ENCODE measurements at regions of chr1 and their contacts with region 1.

Region 1: GRCh38 chr1:209860293-209860881 is 32.6 kb downstream of the UTP25 start:
- DNase-seq: peak; percentile 73
- ATAC-seq: peak; percentile 95
- H3K4me3 ChIP-seq: no peak overlapping the region
- H3K27ac ChIP-seq: no peak overlapping the region
- H3K4me1 ChIP-seq: peaks cover 0 to 14% of the 10 kb centered on the region in 2 experiments; a peak in 2 of 4 replicates
- H3K27me3 ChIP-seq: no peaks in the 10 kb centered on the region
- CTCF ChIP-seq: peak; percentile 82 to 83 (median 83)
- POLR2A ChIP-seq: no peak
- RAD21 ChIP-seq: peak; percentile 87

Region 2: DNA sequence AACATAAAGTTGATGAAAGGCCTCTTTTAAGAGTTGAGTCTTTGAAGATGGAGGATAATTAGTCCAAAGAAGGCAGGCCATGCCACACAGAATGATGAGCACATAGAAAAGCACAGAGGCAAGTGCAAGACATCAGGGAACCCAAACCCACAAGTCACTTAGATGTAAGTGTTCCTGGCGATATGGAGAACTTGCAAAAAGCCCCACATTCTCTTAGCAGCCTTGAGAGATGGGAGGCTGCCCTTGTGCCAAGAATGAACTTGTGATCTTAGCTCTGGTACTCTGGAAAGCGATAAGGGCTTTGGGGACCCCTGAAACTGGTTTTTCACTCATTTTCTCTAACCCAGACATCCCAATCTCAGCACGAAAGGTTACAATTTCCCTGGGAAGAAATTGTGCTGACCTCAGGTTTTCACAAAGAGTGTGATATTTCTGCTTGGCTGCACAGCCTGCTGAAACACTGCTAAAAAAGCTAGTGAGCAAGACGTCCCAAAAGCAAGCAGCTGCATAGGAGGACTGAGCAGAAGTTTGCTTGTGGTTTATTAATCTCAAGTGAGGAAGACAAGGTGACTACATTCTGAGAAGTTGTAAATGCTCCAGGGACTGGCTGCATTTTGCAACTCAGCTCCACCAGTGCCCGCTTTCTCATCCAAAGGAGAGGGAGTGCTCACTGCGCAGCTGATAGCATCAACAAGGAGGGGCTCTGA is 773.7 kb before region 1 on chr1:
- CTCF ChIA-PET with region 1: no interaction called
- POLR2A ChIA-PET with region 1: no interaction called
- RAD21 ChIA-PET with region 1: no interaction called
- intact Hi-C with region 1: no loop called
- DNase-seq: no peak
- ATAC-seq: no peak
- H3K4me3 ChIP-seq: no peak overlapping the region
- H3K27ac ChIP-seq: no peak overlapping the region
- H3K4me1 ChIP-seq: no peaks in the 10 kb centered on the region
- H3K27me3 ChIP-seq: no peaks in the 10 kb centered on the region
- CTCF ChIP-seq: no peak
- POLR2A ChIP-seq: no peak
- RAD21 ChIP-seq: no peak

Region 3: DNA sequence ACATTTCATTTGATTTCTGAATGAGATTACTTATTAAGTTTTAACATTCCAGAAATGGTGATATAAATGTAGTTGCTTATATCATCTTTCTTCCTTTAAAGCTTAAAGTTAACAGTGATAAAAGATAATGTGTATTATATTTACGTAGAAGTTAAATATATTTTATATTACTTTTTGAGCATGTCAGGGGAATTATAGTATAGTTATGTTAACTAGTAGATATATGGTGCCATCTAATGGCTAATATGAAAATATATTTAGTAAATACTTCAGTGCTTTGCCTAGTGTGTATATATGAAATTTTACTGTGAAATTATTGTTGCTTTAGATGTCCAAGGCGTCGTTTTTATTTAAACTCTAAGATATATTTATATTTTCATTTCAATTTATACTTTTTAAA is 129.1 kb after region 1 on chr1:
- CTCF ChIA-PET with region 1: interaction called, 44 read pairs
- POLR2A ChIA-PET with region 1: no interaction called
- RAD21 ChIA-PET with region 1: no interaction called
- intact Hi-C with region 1: loop called (anchors 1 kb)
- DNase-seq: no peak
- ATAC-seq: peak; percentile 76
- H3K4me3 ChIP-seq: no peak overlapping the region
- H3K27ac ChIP-seq: no peak overlapping the region
- H3K4me1 ChIP-seq: no peaks in the 10 kb centered on the region
- H3K27me3 ChIP-seq: peaks cover 29% of the 10 kb centered on the region
- CTCF ChIP-seq: peak in 1 of 3 experiments; percentile 57; a peak in 2 of 6 replicates
- POLR2A ChIP-seq: no peak
- RAD21 ChIP-seq: peak; percentile 63

Region 4: DNA sequence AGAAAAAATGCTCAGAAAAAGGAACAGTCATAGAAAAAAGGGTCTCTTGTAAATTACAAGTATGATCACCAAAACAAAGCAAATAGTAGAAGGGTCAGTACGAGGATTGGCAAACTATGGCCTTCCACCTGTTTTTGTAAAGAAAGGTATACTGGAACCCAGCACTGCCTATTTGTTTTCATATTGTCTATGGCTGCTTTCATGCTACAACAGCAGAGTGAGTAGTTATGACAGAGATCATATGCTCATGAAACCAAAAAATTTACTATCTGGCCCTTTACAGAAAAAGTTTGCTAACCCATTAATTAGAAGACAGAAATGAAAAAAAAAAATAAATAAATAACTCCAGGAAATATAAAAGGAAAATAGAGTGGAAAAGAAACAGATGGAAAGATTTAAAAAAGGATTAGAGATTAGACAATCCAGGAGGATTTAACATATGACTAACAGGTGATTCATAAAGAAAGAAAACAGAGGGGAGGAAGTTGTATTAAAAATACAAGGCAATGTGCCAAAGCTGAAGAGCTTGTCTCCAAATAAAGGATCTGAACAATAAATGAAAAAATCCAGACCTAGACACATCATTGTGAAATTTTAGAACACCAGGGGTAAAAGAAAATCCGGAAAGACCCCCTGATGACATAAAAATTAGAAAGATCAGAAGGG is 263.7 kb after region 1 on chr1:
- CTCF ChIA-PET with region 1: no interaction called
- POLR2A ChIA-PET with region 1: no interaction called
- RAD21 ChIA-PET with region 1: no interaction called
- intact Hi-C with region 1: no loop called
- DNase-seq: no peak
- ATAC-seq: no peak
- H3K4me3 ChIP-seq: no peak overlapping the region
- H3K27ac ChIP-seq: no peak overlapping the region
- H3K4me1 ChIP-seq: no peaks in the 10 kb centered on the region
- H3K27me3 ChIP-seq: peaks cover 57% of the 10 kb centered on the region
- CTCF ChIP-seq: no peak
- POLR2A ChIP-seq: no peak
- RAD21 ChIP-seq: no peak

Region 5: DNA sequence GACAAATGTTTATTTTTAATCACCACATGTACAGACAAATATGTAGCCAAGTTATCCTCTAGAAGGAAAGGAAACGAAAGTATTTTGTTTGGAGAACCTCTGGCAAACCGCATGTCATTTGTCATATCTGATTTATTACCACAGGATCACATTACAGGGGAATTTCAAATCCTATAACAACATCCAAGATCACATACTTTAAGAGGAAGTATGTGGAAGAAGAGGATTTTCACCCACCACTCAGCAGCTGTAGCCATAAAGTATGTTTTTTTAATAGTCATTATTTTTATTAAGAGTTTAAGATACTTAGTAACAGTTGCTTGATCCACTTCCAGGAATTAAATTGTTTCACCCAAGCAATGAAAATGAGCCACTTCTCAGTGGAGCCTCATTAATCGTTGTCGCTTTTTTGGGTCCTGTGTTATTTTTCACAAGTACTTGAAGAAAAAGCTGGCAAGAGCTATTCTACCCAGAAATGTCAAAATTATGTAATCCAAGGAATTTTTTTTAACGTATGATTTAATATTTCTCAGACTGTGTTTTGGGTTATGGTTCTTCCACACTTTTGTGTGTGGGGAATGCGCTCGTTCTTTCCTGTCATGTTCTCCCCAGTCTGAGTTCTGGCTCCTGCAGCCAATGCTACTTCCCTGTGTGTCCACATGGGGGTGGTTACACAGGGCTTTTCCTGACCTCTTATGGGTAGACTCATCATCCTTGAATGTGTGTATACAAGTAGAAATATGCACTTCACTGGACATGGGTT is 379.1 kb after region 1 on chr1:
- CTCF ChIA-PET with region 1: no interaction called
- POLR2A ChIA-PET with region 1: no interaction called
- RAD21 ChIA-PET with region 1: no interaction called
- intact Hi-C with region 1: loop called (anchors 10 kb)
- DNase-seq: peak; percentile 28
- ATAC-seq: peak; percentile 98
- H3K4me3 ChIP-seq: no peak overlapping the region
- H3K27ac ChIP-seq: no peak overlapping the region
- H3K4me1 ChIP-seq: peaks cover 4 to 8% of the 10 kb centered on the region in 2 experiments; a peak in 3 of 4 replicates
- H3K27me3 ChIP-seq: peaks cover 41% of the 10 kb centered on the region
- CTCF ChIP-seq: peak; percentile 15 to 71 (median 61); a peak in 5 of 6 replicates
- POLR2A ChIP-seq: no peak
- RAD21 ChIP-seq: peak; percentile 33; the same call in 1 of the 2 replicates